ENCODE measurements at regions of chrX and their contacts with region 1.

Region 1: GRCh38 chrX:33336783-33337182 is 125.4 kb upstream of the DMD start:
- H3K4me3 ChIP-seq: no peak overlapping the region
- H3K27ac ChIP-seq: no peak overlapping the region
- H3K4me1 ChIP-seq: no peaks in the 10 kb centered on the region
- CTCF ChIP-seq: no peak

Region 2: DNA sequence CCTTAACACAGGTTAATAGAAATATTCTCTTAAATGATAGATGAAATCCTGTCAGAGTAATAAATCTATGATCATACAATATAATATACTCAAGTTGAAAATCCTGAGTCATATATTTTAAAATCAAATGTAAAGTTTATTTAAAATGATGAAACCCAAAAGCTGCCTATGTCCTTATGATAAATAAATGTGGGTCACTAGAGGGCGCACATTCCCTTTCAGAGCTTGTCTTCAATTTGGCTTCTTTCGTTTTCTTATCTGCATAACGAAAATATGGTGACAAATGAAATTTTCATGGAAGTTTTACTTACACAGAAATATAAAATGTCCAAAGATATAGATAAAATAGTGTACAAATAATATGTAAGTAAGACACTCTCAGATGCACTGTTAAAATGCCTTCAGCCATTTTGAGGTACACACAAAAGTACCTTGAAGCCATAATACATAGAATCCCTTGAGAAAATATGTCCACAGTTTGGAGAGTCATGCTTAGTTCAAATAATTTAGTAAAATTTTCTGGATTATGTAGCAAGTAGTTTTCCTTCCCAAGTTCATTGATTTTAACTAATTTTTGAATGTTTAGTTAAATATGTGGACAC is 805.9 kb before region 1 on chrX:
- CTCF ChIA-PET with region 1: interaction called, 10 read pairs
- POLR2A ChIA-PET with region 1: no interaction called
- H3K4me3 ChIP-seq: no peak overlapping the region
- H3K27ac ChIP-seq: no peak overlapping the region
- H3K4me1 ChIP-seq: no peaks in the 10 kb centered on the region
- CTCF ChIP-seq: peak; percentile 26; the same call in 1 of the 2 replicates